ENCODE measurements at regions of chr16 and their contacts with region 1.

Region 1: GRCh38 chr16:83606486-83607030 is 201.2 kb upstream of the HSBP1 start:
- DNase-seq: no peak
- H3K4me3 ChIP-seq: no peak overlapping the region
- CTCF ChIP-seq: no peak

Region 2: GRCh38 chr16:83701494-83701893 is 94.9 kb after region 1 on chr16:
- in situ Hi-C with region 1: loop called (anchors 25 kb)
- DNase-seq: peak; percentile 26
- H3K4me3 ChIP-seq: no peak overlapping the region
- CTCF ChIP-seq: no peak

Region 3: GRCh38 chr16:84308120-84308519 is 701.6 kb after region 1 on chr16:
- in situ Hi-C with region 1: no loop called
- DNase-seq: no peak
- H3K4me3 ChIP-seq: no peak overlapping the region
- CTCF ChIP-seq: peak; percentile 36

Measured in astrocyte of the cerebellum (primary cell).